Activated CD4-positive, alpha-beta memory T cell treated with anti-CD3 and anti-CD28 coated beads, Interleukin-2, amount 10 ng/mL, durations not matched to agents 7 days and 5 days (primary cell): ENCODE measurements at regions of chr6 and their contacts with region 1.

Region 1: DNA sequence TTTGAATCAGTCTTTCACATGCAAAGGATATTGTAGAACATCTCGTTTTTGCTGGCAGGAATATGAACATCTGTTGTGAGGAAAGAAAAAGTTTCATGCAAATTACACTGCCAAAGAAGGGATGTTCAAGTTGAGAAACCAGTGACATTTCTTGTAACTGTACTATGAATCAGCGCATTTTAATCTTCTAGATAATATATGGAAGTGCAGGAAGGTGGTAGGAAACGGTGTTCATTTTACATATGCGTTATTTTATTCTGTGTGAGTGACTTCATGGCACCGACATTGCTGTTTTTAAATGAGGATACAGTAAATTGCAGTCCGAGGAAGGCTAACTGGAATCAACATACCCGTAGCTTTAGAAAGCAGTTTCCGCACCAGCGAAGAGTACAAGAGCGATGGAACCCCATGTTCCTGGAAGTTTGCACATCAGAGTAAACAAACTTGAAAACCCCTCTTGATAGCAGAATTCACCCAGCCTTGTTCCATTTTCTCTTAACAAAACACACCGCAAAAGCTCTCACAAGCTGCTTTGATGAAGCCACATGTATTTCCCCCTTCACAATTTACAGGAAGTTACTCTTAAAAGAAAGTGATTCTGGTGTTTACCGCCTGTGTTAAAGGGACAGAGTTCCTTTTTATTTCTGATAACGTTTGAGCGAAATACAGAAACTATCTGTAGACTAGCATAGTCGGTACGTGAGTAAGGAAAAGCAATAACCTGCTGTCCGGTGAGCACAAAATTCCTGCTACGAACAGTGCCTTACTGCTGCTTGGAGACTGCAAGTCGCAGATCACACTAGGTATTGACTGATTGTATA is 11.5 kb downstream of the PRDM1 start:
- DNase-seq: peak; percentile 63
- H3K4me3 Mint-ChIP-seq: peak overlapping the region; percentile 87
- H3K27ac Mint-ChIP-seq: peak overlapping the region; percentile 97
- H3K4me1 Mint-ChIP-seq: peaks cover 70% of the 10 kb centered on the region
- H3K27me3 Mint-ChIP-seq: no peaks in the 10 kb centered on the region

Region 2: DNA sequence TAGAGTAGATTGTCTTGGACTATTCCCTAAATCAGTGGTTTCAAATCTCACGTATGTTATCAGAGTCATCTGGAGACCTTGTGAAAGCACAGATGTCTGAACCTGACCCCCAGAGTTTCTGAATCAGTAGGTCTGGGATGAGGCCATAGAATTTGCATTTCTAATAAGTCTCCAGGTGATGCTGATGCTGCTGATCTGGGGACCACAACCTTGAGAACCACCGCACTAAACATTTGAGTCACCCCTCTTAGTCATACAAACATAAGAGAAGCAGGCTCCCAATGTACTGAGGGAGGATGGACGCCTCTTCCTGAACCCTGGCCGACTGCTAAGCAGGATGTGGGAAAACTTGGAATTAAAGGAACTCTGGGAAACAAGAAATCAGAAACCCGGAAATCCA is 199.3 kb before region 1 on chr6:
- CTCF ChIA-PET with region 1: no interaction called
- POLR2A ChIA-PET with region 1: interaction called, 11 read pairs
- DNase-seq: peak; percentile 62
- H3K4me3 Mint-ChIP-seq: no peak overlapping the region
- H3K27ac Mint-ChIP-seq: no peak overlapping the region
- H3K4me1 Mint-ChIP-seq: peaks cover 27% of the 10 kb centered on the region
- H3K27me3 Mint-ChIP-seq: no peaks in the 10 kb centered on the region

Region 3: DNA sequence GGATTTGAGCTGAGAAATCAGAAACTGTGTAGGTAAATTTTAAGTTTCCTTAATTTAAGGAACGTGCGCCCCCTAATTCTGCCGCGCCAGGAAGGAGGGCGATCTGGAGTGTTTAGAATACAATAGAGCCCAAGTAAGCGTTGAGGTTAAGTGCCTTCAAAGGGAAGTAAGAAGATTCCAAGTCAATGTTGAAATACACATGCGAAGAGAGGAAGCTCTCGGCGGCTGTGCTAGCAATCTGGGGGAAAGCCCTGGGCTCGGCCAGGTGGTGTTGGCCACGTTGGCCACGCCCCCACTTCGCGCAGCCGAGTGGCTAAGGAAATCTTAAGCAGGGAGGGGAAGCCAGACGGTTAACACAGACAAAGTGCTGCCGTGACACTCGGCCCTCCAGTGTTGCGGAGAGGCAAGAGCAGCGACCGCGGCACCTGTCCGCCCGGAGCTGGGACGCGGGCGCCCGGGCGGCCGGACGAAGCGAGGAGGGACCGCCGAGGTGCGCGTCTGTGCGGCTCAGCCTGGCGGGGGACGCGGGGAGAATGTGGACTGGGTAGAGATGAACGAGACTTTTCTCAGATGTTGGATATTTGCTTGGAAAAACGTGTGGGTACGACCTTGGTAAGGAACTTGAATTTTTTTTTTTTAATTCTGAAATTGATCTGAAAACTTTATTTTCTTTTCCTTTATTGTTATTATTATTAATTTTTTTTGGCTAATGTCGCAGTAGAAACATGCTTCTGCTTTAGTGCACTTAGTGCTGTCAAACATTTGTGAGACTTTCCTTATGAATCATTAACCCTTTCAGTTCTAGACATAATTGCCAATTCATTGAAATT is 11.4 kb before region 1 on chr6 and contains the start of gene PRDM1:
- CTCF ChIA-PET with region 1: interaction called, 13 read pairs
- POLR2A ChIA-PET with region 1: interaction called, 207 read pairs
- DNase-seq: peak; percentile 90
- H3K4me3 Mint-ChIP-seq: peak within 1 kb of the TSS; percentile 97
- H3K27ac Mint-ChIP-seq: peak within 1 kb of the TSS; percentile 71
- H3K4me1 Mint-ChIP-seq: peaks cover 68% of the 10 kb centered on the region
- H3K27me3 Mint-ChIP-seq: no peaks in the 10 kb centered on the region
- total RNA-seq, gene PRDM1: 112 to 115 TPM

Region 4: GRCh38 chr6:106141441-106142237 is 44.0 kb after region 1 on chr6:
- CTCF ChIA-PET with region 1: interaction called, 7 read pairs
- POLR2A ChIA-PET with region 1: interaction called, 47 read pairs
- DNase-seq: peak; percentile 67
- H3K4me3 Mint-ChIP-seq: peak overlapping the region; percentile 33
- H3K27ac Mint-ChIP-seq: peak overlapping the region; percentile 96
- H3K4me1 Mint-ChIP-seq: peaks cover 63% of the 10 kb centered on the region
- H3K27me3 Mint-ChIP-seq: no peaks in the 10 kb centered on the region

Region 5: GRCh38 chr6:106194949-106195921 is 97.6 kb after region 1 on chr6:
- CTCF ChIA-PET with region 1: interaction called, 3 read pairs
- POLR2A ChIA-PET with region 1: interaction called, 121 read pairs
- DNase-seq: no peak
- H3K4me3 Mint-ChIP-seq: peak overlapping the region; percentile 67
- H3K27ac Mint-ChIP-seq: peak overlapping the region; percentile 93
- H3K4me1 Mint-ChIP-seq: peaks cover 55% of the 10 kb centered on the region
- H3K27me3 Mint-ChIP-seq: no peaks in the 10 kb centered on the region